PC-9 (cell line): ENCODE measurements at regions of chr11 and their contacts with region 1.

Region 1: DNA sequence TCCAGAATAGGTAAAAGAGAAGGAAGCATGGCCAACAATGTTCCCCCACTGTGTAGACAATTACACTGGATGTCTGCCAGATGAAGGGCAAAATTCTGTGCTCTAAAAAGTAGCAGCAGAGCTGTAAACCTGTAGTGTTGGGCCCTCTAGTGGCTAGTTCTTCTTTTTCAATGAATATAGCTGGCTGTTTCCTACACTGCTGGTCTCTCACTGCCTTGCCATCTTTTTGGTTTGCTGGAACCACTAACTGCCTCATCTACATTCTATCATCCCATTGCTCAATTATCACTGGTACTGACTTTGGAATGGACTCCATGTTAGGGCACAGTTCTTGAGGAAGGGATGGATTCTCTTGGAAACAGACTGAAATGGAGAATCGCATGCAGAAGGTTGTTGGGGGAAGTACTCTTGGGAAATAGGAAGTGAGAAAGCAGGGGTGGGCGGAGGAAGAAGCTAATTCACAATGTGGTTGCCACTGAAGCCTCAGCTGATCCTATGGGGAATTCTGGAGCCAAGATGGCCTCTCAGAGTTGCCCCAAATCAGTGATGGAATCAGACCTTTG is 17.9 kb downstream of the KCNE3 start:
- DNase-seq: peak; percentile 43 to 52
- H3K4me3 ChIP-seq: no peak overlapping the region
- H3K27ac ChIP-seq: no peak overlapping the region
- H3K4me1 ChIP-seq: no peaks in the 10 kb centered on the region
- H3K27me3 ChIP-seq: no peaks in the 10 kb centered on the region
- CTCF ChIP-seq: peak; percentile 92

Region 2: GRCh38 chr11:73965076-73965860 is 484.2 kb before region 1 on chr11:
- CTCF ChIA-PET with region 1: interaction called, 3 read pairs
- POLR2A ChIA-PET with region 1: no interaction called
- intact Hi-C with region 1: loop called (anchors 2 kb)
- DNase-seq: no peak
- H3K4me3 ChIP-seq: no peak overlapping the region
- H3K27ac ChIP-seq: no peak overlapping the region
- H3K4me1 ChIP-seq: no peaks in the 10 kb centered on the region
- H3K27me3 ChIP-seq: no peaks in the 10 kb centered on the region
- CTCF ChIP-seq: no peak

Region 3: GRCh38 chr11:74138572-74138971 is 310.9 kb before region 1 on chr11:
- CTCF ChIA-PET with region 1: no interaction called
- POLR2A ChIA-PET with region 1: no interaction called
- intact Hi-C with region 1: no loop called
- DNase-seq: peak; percentile 67 to 99
- H3K4me3 ChIP-seq: peak overlapping the region; percentile 19; the same call in 1 of the 2 replicates
- H3K27ac ChIP-seq: peak overlapping the region; percentile 91
- H3K4me1 ChIP-seq: peaks cover 45% of the 10 kb centered on the region
- H3K27me3 ChIP-seq: no peaks in the 10 kb centered on the region
- CTCF ChIP-seq: no peak

Region 4: DNA sequence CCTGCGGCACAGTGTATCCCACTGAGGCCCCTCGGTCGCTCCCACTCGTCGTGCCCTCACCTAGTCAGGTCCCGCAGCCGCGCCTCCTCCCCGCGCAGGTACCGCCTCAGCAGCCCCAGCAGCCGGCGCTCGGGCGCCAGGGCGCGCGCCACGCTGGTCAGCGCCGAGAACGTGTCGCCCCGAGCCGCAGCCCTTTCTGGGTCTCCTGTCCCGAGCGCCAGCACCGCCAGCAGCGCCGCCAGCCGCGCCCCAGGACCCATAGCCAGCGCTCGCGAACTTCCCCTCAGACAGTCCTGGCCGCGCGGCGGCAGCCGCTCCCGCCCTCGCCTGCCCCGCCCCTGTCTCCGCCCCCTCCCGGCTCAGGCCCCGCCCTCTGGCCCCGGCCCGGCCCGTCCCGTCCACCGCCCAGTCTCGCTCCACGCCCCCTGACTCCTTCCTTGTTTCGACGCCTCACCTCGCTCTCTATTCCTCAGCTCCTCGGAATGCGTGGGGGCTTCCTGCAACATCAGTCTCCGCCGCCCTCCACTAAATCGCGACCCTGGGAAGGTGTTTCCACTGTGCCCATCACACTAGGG is 138.0 kb before region 1 on chr11 and contains the start of gene P4HA3:
- CTCF ChIA-PET with region 1: no interaction called
- POLR2A ChIA-PET with region 1: no interaction called
- intact Hi-C with region 1: loop called (anchors 1 kb)
- DNase-seq: peak in 1 of 2 experiments; percentile 52
- H3K4me3 ChIP-seq: no peak within 1 kb of the TSS; the same call in 1 of the 2 replicates
- H3K27ac ChIP-seq: no peak within 1 kb of the TSS
- H3K4me1 ChIP-seq: no peaks in the 10 kb centered on the region
- H3K27me3 ChIP-seq: no peaks in the 10 kb centered on the region; the same call in 1 of the 2 replicates
- CTCF ChIP-seq: no peak
- total RNA-seq, gene P4HA3: 0.22 and 0.60 TPM in 2 replicates

Region 5: GRCh38 chr11:74570266-74571061 is 121.0 kb after region 1 on chr11:
- CTCF ChIA-PET with region 1: interaction called, 80 read pairs
- POLR2A ChIA-PET with region 1: no interaction called
- intact Hi-C with region 1: loop called (anchors 1 kb)
- DNase-seq: peak; percentile 59 to 60
- H3K4me3 ChIP-seq: no peak overlapping the region
- H3K27ac ChIP-seq: no peak overlapping the region
- H3K4me1 ChIP-seq: no peaks in the 10 kb centered on the region
- H3K27me3 ChIP-seq: no peaks in the 10 kb centered on the region
- CTCF ChIP-seq: peak; percentile 95

Region 6: DNA sequence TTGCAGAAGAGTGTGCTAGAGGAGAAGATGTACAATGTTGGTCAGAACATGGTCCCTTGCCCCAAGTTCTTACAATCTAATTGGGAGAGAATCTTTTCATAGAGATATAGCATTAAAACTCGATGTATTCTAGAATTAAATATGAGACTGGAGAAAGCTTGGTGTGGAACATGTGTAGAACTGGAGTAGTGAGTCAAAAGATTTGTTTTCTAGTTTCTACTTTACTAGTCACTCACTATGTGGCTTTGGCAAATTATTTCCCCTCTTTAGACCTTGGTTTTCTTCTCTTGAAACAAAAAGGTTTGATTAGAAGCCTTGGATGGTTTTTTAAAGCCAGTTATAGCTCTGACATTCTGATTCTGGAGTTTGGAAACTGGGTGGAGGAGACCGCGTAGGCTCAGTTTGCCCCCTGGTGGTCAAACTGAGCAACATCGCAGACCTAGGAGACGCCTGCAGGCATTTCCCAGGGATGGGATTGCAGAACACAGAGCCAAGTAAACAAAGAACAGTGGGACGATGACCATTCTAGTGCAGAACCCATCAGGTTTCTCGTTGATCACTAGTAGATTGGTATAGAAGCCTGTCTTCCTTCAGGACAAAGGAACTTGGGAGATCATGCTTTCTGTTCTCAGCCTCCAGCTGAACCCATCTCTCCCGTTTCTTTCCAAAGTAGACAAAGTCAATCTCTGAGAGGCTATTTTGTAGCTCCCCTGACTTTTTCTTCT is 290.3 kb after region 1 on chr11:
- CTCF ChIA-PET with region 1: interaction called, 6 read pairs
- POLR2A ChIA-PET with region 1: no interaction called
- intact Hi-C with region 1: loop called (anchors 2 kb)
- DNase-seq: peak; percentile 58 to 66
- H3K4me3 ChIP-seq: no peak overlapping the region
- H3K27ac ChIP-seq: no peak overlapping the region
- H3K4me1 ChIP-seq: 0 out of 2 replicates have a peak, but pooled peaks cover 4% of the 10 kb centered on the region
- H3K27me3 ChIP-seq: no peaks in the 10 kb centered on the region
- CTCF ChIP-seq: peak; percentile 98